Activated CD4-positive, alpha-beta T cell treated with anti-CD3 and anti-CD28 coated beads for 36 hours (primary cell): ENCODE measurements at regions of chr4 and their contacts with region 1.

Region 1: GRCh38 chr4:177555007-177555574 is 112.9 kb upstream of the AGA start:
- DNase-seq: peak; percentile 53
- ATAC-seq: no peak
- H3K4me3 Mint-ChIP-seq: no peak overlapping the region
- H3K27ac Mint-ChIP-seq: no peak overlapping the region
- H3K4me1 Mint-ChIP-seq: no peaks in the 10 kb centered on the region
- H3K27me3 Mint-ChIP-seq: no peaks in the 10 kb centered on the region

Region 2: GRCh38 chr4:177948853-177949252 is 393.8 kb after region 1 on chr4:
- CTCF ChIA-PET with region 1: no interaction called
- POLR2A ChIA-PET with region 1: no interaction called
- intact Hi-C with region 1: no loop called
- DNase-seq: no peak
- ATAC-seq: no peak
- H3K4me3 Mint-ChIP-seq: no peak overlapping the region
- H3K27ac Mint-ChIP-seq: no peak overlapping the region
- H3K4me1 Mint-ChIP-seq: no peaks in the 10 kb centered on the region
- H3K27me3 Mint-ChIP-seq: no peaks in the 10 kb centered on the region

Region 3: DNA sequence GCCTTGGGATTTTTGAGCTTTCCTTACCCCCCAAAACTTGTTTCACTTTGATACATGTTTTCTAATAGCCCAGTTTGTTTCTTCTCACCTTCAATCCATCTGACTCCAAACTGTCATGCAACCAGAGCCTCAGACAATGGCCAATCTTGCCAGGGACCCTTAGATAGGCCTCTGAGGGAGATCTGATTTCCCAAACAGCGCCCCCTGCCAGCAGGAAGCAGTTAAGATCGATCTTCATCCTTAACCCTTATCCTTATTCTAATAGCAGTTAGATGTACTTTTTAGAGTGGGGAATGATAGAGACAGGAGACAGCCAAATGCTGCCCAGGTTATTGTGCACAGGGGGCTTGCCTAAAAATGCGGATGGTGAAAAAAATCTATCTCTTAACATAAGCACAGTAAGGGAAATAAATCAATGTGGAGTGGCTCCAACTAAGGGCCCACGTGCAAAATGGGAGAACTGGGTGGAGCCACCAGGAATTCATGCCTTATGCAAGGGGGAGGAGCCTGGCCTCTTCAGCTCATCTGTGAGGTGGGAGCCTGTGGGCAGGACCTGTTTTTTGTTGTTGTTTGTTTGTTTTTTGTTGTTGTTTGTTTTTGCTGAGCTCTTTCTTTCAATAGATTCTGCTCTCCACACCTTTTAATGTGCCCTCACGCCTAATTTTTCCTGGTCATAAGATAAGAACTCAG is 720.7 kb after region 1 on chr4:
- CTCF ChIA-PET with region 1: no interaction called
- POLR2A ChIA-PET with region 1: no interaction called
- intact Hi-C with region 1: loop called in 1 of 2 experiments (anchors 5 kb)
- DNase-seq: peak; percentile 12
- ATAC-seq: no peak
- H3K4me3 Mint-ChIP-seq: no peak overlapping the region
- H3K27ac Mint-ChIP-seq: no peak overlapping the region
- H3K4me1 Mint-ChIP-seq: no peaks in the 10 kb centered on the region
- H3K27me3 Mint-ChIP-seq: no peaks in the 10 kb centered on the region

Region 4: DNA sequence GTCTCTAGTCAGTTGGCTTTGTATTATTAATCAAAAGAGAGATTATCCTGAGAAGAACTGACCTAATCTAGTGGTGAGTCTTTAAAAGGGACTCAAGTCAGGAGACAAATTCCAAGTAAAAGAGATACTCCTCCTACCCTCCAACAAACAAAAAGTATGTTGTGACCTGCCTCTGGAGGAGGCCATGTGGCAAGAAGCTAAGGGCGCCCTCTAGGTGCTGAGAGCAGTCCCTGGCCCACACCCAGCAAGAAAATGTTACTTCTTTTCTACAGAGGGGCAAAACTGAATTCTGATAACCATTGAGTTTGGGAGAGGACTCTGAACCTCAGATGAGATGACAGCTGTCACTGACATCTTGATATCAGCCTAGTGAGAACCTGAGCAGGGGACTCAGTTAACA is 840.7 kb after region 1 on chr4:
- CTCF ChIA-PET with region 1: no interaction called
- POLR2A ChIA-PET with region 1: no interaction called
- intact Hi-C with region 1: loop called in 1 of 2 experiments (anchors 5 kb)
- DNase-seq: peak; percentile 13
- ATAC-seq: no peak
- H3K4me3 Mint-ChIP-seq: no peak overlapping the region
- H3K27ac Mint-ChIP-seq: no peak overlapping the region
- H3K4me1 Mint-ChIP-seq: no peaks in the 10 kb centered on the region
- H3K27me3 Mint-ChIP-seq: no peaks in the 10 kb centered on the region

Region 5: GRCh38 chr4:179307297-179308136 is 1752.4 kb after region 1 on chr4:
- CTCF ChIA-PET with region 1: no interaction called
- POLR2A ChIA-PET with region 1: no interaction called
- intact Hi-C with region 1: loop called (anchors 2 to 10 kb)
- DNase-seq: peak; percentile 32
- ATAC-seq: no peak
- H3K4me3 Mint-ChIP-seq: no peak overlapping the region
- H3K27ac Mint-ChIP-seq: no peak overlapping the region
- H3K4me1 Mint-ChIP-seq: no peaks in the 10 kb centered on the region
- H3K27me3 Mint-ChIP-seq: no peaks in the 10 kb centered on the region